Activated T-helper 2 cell treated with anti-CD3 and anti-CD28 coated beads, Interferon-gamma antibody, Interleukin-2, Interleukin-4, amounts not matched to agents 10 μg/mL and 5 μg/mL and 100 μg/mL, durations not matched to agents 14 hours and 24 hours and 36 hours (primary cell): ENCODE measurements at regions of chr15 and their contacts with region 1.

Region 1: GRCh38 chr15:39125904-39126303 is 455.0 kb upstream of the THBS1 start:
- DNase-seq: peak; percentile 15
- H3K4me3 Mint-ChIP-seq: no peak overlapping the region
- H3K27ac Mint-ChIP-seq: no peak overlapping the region
- H3K4me1 Mint-ChIP-seq: peaks cover 20% of the 10 kb centered on the region
- H3K27me3 Mint-ChIP-seq: peaks cover 11% of the 10 kb centered on the region

Region 2: GRCh38 chr15:39171944-39172368 is 46.1 kb after region 1 on chr15:
- intact Hi-C with region 1: loop called (anchors 5 kb)
- DNase-seq: no peak
- H3K4me3 Mint-ChIP-seq: no peak overlapping the region
- H3K27ac Mint-ChIP-seq: no peak overlapping the region
- H3K4me1 Mint-ChIP-seq: peaks cover 4% of the 10 kb centered on the region
- H3K27me3 Mint-ChIP-seq: peaks cover 24% of the 10 kb centered on the region